T-cell (primary cell): ENCODE measurements at regions of chr9 and their contacts with region 1.

Region 1: GRCh38 chr9:129006328-129007034 is 21.6 kb downstream of the SH3GLB2 start:
- DNase-seq: peak in 25 of 35 experiments; percentile 9 to 68 (median 26)
- ATAC-seq: peak; percentile 69 to 83 (median 76)
- H3K4me3 ChIP-seq: no peak overlapping the region
- H3K4me3 Mint-ChIP-seq: no peak overlapping the region
- H3K27ac ChIP-seq: no peak overlapping the region
- H3K27ac Mint-ChIP-seq: peak overlapping the region in 1 of 2 donors; percentile 55
- H3K4me1 ChIP-seq: no peaks in the 10 kb centered on the region
- H3K4me1 Mint-ChIP-seq: no peaks in the 10 kb centered on the region
- H3K27me3 ChIP-seq: no peaks in the 10 kb centered on the region
- H3K27me3 Mint-ChIP-seq: no peaks in the 10 kb centered on the region

Region 2: DNA sequence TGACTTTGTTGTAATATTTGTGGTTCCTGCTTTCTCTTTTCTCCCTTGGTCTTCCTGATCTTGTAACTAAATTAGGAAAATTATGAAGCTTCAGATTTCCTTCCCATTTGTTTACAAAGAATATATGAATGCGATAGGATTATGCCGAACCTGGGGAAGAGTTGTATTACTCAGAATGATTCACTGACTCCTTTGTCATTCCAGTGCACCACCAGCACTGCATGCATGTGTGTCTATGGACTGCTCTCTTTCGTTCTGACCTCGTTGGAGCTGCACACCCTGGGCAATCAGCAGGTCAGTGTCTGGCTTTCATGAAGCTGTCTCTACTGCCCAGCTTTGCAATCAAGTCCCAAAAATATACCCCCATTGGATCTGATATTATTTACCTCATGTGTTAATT is 33.5 kb before region 1 on chr9:
- CTCF ChIA-PET with region 1: no interaction called
- POLR2A ChIA-PET with region 1: no interaction called
- DNase-seq: no peak
- ATAC-seq: no peak
- H3K4me3 ChIP-seq: no peak overlapping the region
- H3K4me3 Mint-ChIP-seq: no peak overlapping the region
- H3K27ac ChIP-seq: no peak overlapping the region
- H3K27ac Mint-ChIP-seq: no peak overlapping the region
- H3K4me1 ChIP-seq: no peaks in the 10 kb centered on the region
- H3K4me1 Mint-ChIP-seq: no peaks in the 10 kb centered on the region
- H3K27me3 ChIP-seq: no peaks in the 10 kb centered on the region
- H3K27me3 Mint-ChIP-seq: no peaks in the 10 kb centered on the region

Region 3: GRCh38 chr9:128992995-128993394 is 13.5 kb before region 1 on chr9:
- CTCF ChIA-PET with region 1: no interaction called
- POLR2A ChIA-PET with region 1: no interaction called
- DNase-seq: no peak
- ATAC-seq: no peak
- H3K4me3 ChIP-seq: no peak overlapping the region
- H3K4me3 Mint-ChIP-seq: no peak overlapping the region
- H3K27ac ChIP-seq: no peak overlapping the region
- H3K27ac Mint-ChIP-seq: no peak overlapping the region
- H3K4me1 ChIP-seq: peaks cover 0 to 4% of the 10 kb centered on the region in 2 experiments
- H3K4me1 Mint-ChIP-seq: peaks cover 11 to 16% (median 13%) of the 10 kb centered on the region in 3 donors
- H3K27me3 ChIP-seq: no peaks in the 10 kb centered on the region
- H3K27me3 Mint-ChIP-seq: no peaks in the 10 kb centered on the region

Region 4: DNA sequence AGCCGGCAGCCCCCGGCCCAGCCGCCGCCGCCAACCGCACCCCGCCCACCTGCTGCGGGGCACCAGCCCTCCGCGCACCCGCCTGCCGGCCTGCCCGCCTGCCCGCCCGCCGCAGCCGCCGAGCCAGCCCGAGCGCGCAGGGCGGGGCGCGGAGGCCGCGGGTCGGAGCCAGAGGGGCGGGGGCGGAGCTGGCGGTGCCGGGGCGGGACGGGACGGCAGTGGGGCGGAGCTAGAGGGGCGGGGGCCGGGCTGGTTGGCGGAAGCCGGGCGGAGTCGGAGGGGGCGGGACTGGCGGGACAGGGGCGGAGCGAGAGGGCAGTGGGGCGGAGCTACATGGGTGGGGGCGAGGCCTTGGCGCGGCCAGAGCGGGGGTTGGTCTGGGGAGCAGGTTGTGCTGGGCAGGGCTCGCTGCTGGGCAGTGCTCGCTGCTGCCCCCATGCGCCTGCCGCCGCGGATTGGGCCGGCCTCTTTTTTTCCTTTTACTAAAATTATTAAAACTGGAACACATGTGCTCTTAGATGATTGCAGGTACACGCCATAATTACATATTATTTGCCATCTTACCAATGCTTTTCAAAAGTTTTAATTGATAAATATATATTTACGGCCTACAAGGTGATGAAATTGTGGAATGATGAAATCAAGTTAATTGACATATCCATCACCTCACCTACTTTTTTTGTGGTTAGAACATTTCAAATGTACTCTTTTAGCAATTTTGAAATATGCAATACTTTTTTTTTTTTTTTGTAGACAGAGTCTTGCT is 21.9 kb after region 1 on chr9 and contains the start of gene SH3GLB2:
- CTCF ChIA-PET with region 1: interaction called in 1 of 2 experiments, 10 read pairs
- POLR2A ChIA-PET with region 1: no interaction called
- DNase-seq: peak; percentile 73 to 96 (median 87)
- ATAC-seq: peak; percentile 82 to 92 (median 84)
- H3K4me3 ChIP-seq: peak within 1 kb of the TSS; percentile 54 to 79
- H3K4me3 Mint-ChIP-seq: peak within 1 kb of the TSS; percentile 78 to 82 (median 79)
- H3K27ac ChIP-seq: peak within 1 kb of the TSS; percentile 20
- H3K27ac Mint-ChIP-seq: peak within 1 kb of the TSS; percentile 78 to 83
- H3K4me1 ChIP-seq: peaks cover 17 to 20% of the 10 kb centered on the region in 2 experiments
- H3K4me1 Mint-ChIP-seq: peaks cover 16 to 29% (median 22%) of the 10 kb centered on the region in 3 donors
- H3K27me3 ChIP-seq: no peaks in the 10 kb centered on the region
- H3K27me3 Mint-ChIP-seq: no peaks in the 10 kb centered on the region
- total RNA-seq, gene SH3GLB2: 85.8 to 140 (median 131) TPM

Region 5: DNA sequence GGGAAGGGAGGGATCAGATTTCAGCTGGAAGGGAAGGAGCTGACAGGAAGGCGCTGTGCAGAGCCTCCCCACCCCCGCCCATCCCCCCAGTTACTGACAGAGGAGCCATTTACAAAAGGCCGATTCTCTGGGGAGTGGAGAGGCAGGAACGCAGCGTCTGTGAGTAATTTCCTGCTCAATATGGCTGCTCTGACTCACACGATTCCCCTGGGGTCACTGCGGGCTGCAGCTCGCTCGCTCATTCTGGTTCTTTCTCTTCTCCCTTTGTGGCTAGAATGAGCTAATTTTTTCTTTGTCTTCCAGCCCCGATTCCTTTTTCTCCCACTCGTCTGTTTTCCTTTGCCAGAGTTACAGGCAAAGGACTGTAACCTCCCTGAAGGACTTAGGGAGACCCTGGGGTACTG is 133.5 kb after region 1 on chr9:
- CTCF ChIA-PET with region 1: no interaction called
- POLR2A ChIA-PET with region 1: no interaction called
- DNase-seq: peak; percentile 45 to 88 (median 64)
- ATAC-seq: peak; percentile 86 to 89 (median 88)
- H3K4me3 ChIP-seq: peak overlapping the region; percentile 56 to 82
- H3K4me3 Mint-ChIP-seq: peak overlapping the region; percentile 80 to 90 (median 86)
- H3K27ac ChIP-seq: peak overlapping the region; percentile 99
- H3K27ac Mint-ChIP-seq: peak overlapping the region; percentile 92 to 99
- H3K4me1 ChIP-seq: peaks cover 11 to 51% of the 10 kb centered on the region in 2 experiments
- H3K4me1 Mint-ChIP-seq: peaks cover 29 to 41% (median 37%) of the 10 kb centered on the region in 3 donors
- H3K27me3 ChIP-seq: no peaks in the 10 kb centered on the region
- H3K27me3 Mint-ChIP-seq: no peaks in the 10 kb centered on the region